Posterior vena cava (tissue), 2 donors: ENCODE measurements at regions of chr4 and their contacts with region 1.

Region 1: GRCh38 chr4:144498786-144499185 is 147.2 kb upstream of the HHIP start:
- DNase-seq: no peak

Region 2: GRCh38 chr4:144480068-144480467 is 18.7 kb before region 1 on chr4:
- intact Hi-C with region 1: loop called in 1 of 2 experiments (anchors 1 kb)
- DNase-seq: no peak